Cardiac septum (tissue), 1 donor: ENCODE measurements at regions of chr17 and their contacts with region 1.

Region 1: GRCh38 chr17:80879723-80880647 is 111.7 kb upstream of the CHMP6 start:
- DNase-seq: no peak

Region 2: DNA sequence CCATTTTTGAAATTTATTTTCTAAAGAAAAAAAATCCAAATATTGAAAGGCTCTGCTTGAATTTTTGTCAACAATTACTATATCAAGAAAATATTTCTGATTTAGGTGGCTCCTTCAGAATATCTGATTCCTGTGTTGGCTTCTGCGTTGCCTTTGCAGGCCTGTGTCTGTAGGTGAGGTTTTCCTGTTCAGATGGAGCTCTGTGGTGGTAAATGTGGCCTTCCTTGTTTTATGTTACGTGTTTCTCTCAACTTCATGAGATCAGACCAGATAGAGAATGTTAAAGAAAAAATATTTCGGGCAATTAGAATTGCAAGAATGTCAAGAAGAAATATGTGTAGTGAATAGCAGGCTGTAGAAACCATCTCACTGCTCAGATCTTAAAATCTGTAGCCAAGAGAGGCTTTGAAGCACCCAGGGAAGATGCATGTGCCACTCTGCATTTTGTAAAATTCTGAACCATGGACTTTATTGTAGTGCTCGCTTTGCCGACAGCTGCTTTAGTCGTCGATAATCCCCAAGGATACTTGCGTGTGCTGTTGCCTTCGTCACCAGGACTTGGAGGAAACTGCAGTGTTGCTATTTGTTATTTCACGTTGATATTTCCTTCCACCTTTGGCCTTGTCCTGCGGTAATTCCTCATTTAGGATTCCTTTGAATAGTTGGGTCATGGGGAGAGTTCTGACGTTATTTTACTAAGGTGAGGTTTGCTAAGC is 265.5 kb before region 1 on chr17:
- intact Hi-C with region 1: no loop called
- DNase-seq: no peak

Region 3: DNA sequence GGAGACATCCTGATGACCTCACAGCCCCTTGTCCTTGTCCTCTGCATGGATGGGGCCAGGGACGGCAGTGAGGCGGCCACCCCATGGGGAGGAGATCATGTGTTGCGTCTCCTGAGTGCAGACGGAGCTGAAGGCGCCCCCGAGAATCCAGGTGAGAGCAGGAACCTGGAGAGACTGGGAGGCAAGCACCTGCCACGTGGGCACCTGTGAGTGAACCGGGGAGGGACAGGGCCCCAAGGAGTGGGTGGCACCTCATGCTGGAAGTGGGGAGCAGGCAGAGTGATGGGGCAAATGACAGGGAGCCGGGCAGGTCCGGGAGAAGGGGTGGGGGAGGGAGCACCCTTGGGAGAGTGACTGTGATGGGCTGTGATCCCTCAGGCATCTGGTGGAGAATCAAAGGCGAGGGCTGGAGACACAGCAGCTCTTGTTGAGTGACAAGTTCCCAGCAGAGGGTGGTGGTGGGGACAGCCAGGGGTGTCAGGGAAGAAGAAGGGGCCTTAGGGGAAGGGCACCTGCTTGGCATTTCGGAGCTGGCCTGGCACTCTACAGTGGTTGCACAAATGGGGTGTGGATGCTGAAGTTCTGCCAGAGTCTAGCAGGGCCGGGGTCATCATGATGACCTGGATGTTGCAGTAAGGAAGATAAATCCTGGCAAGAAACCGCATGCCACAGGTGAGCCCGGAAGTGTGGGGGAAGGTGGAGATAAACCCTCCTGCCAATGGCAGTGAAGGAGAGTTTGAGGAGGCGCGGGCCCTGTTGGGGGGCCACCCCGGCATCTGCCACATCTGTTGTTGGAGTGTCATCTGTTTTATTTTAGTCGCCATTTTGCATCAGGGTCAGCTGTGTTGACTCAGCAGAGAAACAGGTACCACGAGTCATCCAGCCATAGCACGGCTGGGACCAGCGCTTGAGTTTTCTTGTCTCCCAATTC is 62.4 kb before region 1 on chr17:
- intact Hi-C with region 1: no loop called
- DNase-seq: peak; percentile 69

Region 4: DNA sequence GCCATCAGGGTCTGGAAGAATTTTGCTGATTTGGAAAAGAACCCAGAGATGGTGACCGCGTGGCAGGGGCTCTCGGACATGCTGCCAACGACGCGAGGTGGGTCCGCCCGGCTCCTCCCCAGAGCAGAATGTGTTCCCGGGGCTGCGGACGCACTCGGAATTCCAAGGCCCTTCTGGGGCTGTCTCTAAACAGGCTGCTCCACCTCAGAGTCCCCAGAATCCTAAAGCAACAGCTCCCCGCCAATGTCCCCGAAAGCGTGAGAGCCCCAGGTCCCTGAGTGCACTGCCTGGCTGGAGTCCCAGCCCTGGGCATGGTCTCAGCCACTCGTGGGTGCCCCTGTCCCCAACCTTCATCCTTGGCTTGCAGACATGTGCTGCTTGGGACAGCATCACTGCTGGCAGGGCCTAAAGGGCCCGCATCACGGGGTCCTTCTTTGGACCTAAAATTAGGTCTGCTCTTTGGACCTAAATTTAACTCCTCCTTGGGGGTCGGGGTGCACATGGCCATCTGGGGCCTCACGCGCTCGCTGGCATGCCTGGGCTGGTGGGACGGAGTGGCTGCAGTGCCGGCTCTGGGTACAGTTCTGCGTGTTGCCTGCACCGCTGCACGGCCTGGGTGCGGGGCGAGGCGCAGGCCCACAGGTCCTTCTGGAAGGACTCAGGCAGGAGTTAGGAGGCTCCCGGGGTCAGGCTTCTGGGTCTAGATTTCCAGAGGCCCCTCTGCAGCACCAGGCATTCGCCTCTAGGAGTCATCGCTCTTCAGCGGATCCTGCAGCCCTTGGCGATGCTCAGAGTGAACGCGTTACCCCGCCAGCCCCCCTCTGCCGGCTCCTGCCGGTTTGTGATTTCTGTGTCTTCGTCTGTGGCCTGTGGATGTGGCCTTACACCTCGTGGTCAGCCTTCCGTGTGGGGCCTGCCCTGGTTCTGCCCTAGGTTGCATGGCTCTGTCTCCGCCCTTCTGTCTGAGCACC is 69.8 kb after region 1 on chr17:
- intact Hi-C with region 1: loop called (anchors 5 kb)
- DNase-seq: no peak